ENCODE measurements at regions of chr5 and their contacts with region 1.

Region 1: GRCh38 chr5:179836225-179837019 is 15.7 kb downstream of the SQSTM1 start:
- DNase-seq: peak; percentile 51 to 80
- ATAC-seq: peak; percentile 67 to 93 (median 90)
- H3K4me3 ChIP-seq: no peak overlapping the region
- H3K4me3 Mint-ChIP-seq: peak overlapping the region; percentile 73
- H3K27ac ChIP-seq: peak overlapping the region; percentile 70
- H3K27ac Mint-ChIP-seq: peak overlapping the region; percentile 91 to 94
- H3K4me1 ChIP-seq: peaks cover 20% of the 10 kb centered on the region
- H3K4me1 Mint-ChIP-seq: peaks cover 28 to 31% of the 10 kb centered on the region in 2 donors
- H3K27me3 ChIP-seq: no peaks in the 10 kb centered on the region
- H3K27me3 Mint-ChIP-seq: no peaks in the 10 kb centered on the region
- CTCF ChIP-seq: no peak

Region 2: GRCh38 chr5:179821581-179822432 is 14.6 kb before region 1 on chr5:
- intact Hi-C with region 1: loop called (anchors 1 kb)
- DNase-seq: peak; percentile 91 to 94
- ATAC-seq: peak; percentile 55 to 82 (median 66)
- H3K4me3 ChIP-seq: peak overlapping the region; percentile 96
- H3K4me3 Mint-ChIP-seq: peak overlapping the region; percentile 96
- H3K27ac ChIP-seq: peak overlapping the region; percentile 100
- H3K27ac Mint-ChIP-seq: peak overlapping the region; percentile 97 to 98
- H3K4me1 ChIP-seq: peaks cover 58% of the 10 kb centered on the region
- H3K4me1 Mint-ChIP-seq: peaks cover 41 to 65% of the 10 kb centered on the region in 2 donors
- H3K27me3 ChIP-seq: no peaks in the 10 kb centered on the region
- H3K27me3 Mint-ChIP-seq: no peaks in the 10 kb centered on the region
- CTCF ChIP-seq: no peak

Region 3: DNA sequence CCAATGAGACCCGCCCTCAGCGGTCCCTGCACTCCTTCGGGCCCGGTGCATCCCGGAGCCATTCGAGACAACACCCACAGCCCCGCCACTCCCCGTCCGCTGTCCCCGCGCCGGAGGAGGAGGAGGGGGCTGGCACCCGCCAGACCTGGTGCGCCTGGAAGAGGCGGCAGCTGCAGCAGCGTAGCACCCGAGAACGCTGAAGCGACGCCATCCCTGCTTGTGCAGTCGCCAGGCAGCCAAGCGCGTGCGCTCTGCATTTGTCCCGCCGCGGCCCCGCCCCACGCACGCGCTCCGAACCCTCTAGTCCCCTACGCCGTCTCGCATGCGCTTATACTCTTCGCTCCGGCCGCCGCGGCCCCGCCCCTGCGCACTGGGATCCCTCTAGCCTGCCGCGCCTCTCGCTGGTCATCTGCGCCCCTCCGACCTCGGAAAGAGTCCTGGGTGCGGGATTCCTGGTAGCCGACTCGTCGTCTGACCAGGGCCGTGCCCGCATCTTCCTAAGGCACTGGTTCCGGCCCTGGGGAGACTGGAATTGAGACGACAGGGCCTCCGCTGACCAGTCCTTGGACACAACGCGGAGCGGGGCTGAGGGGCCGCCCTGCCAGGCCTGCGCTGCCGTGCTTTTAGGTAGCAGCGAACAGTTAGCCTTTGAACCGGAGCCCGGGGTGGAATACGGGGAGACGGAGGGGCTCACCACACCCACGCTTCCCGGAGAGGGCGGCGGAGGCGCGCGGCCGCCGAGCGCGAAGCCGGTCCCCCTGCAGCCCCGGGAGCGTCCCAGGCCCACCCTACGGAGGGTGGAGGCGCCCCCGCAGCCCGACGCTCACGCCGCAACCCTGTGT is 22.4 kb after region 1 on chr5 and contains the start of gene MRNIP:
- intact Hi-C with region 1: loop called (anchors 2 kb)
- DNase-seq: peak; percentile 82 to 94
- ATAC-seq: peak; percentile 96 to 98 (median 97)
- H3K4me3 ChIP-seq: peak within 1 kb of the TSS; percentile 98
- H3K4me3 Mint-ChIP-seq: peak within 1 kb of the TSS; percentile 95
- H3K27ac ChIP-seq: peak within 1 kb of the TSS; percentile 52
- H3K27ac Mint-ChIP-seq: peak within 1 kb of the TSS; percentile 78 to 91
- H3K4me1 ChIP-seq: peaks cover 13% of the 10 kb centered on the region
- H3K4me1 Mint-ChIP-seq: peaks cover 8 to 15% of the 10 kb centered on the region in 2 donors
- H3K27me3 ChIP-seq: no peaks in the 10 kb centered on the region
- H3K27me3 Mint-ChIP-seq: no peaks in the 10 kb centered on the region
- CTCF ChIP-seq: no peak
- total RNA-seq, gene MRNIP: 19.7 to 40.2 (median 25.4) TPM